ENCODE measurements at regions of chr20 and their contacts with region 1.

Region 1: DNA sequence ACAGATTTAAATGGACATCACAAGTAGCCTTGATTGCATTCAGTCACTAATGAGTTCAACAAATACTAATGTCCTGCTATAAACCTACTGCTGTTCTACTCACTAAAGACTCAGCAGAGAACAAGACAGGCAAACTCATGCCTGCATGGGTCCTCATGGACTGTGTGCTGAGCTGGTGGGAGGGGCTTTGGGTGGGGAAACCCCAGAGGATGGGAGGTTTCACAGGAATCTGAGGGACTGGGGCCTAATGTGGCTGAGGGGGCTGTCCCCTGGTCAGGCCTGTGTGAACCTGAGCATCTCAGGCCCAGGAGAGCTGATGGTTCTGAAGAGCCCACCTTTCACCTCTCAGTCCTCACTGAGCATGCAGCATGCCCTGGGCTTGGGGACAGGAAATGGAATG is 1.4 kb downstream of the CST8 start:
- DNase-seq: no peak
- ATAC-seq: no peak

Region 2: DNA sequence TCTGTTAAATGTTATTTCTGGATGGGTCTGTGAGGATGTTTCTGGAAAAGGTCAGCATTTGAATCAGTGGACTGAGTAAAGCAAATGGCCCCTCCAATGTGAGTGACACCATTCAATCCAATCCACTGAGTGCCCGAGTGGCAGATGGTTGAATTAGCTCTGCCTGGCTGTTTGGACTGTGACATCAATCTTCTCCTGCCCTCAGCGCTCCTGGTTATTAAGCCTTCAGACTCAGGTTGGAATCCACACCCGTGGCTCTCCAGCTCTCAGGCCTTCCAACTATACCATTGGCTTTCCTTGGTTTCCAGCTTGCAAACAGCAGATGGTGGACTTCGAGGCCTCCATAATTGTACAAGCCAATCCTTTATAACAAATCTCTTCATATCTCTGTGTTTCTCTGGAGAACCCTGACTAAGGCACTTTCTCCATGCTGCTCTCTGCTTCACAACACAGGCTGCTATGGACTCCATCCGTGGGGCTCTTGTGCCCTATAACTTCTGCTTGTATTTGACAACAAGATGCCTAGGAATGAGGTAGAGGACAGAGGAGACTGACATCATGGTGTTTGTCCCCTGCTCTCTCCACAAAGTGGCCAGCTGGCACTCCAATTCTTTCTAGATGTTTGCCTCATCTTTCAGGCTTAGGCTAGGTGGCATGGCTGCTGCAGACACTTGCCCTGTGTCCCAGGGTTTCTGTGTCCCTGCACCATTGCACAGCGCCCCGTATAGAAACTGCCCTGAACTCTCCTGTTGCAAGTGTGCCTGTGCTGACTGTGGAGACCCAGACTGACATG is 57.6 kb before region 1 on chr20:
- intact Hi-C with region 1: no loop called
- DNase-seq: no peak
- ATAC-seq: no peak

Region 3: DNA sequence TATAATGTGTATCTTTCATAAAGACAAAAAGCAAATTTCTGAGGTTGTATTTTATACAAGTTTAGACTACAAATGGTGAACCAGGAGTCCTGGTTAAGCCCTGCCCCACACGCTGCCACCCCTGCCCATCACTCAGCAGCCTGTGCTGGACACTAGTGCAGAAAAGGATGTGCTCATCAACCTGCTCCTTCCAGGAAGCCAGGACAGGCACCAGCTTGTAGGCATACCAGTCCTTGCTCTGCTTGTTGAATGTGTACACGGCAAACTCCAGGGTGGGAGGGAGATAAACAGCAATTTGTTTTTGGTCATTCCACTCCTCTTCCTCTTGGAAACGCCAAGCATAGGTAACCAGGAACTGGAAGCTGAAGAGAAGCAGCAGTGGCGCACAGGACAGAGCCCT is 57.9 kb after region 1 on chr20:
- intact Hi-C with region 1: loop called in 1 of 2 experiments (anchors 10 kb)
- DNase-seq: no peak
- ATAC-seq: no peak